ENCODE measurements at regions of chr7 and their contacts with region 1.

Region 1: DNA sequence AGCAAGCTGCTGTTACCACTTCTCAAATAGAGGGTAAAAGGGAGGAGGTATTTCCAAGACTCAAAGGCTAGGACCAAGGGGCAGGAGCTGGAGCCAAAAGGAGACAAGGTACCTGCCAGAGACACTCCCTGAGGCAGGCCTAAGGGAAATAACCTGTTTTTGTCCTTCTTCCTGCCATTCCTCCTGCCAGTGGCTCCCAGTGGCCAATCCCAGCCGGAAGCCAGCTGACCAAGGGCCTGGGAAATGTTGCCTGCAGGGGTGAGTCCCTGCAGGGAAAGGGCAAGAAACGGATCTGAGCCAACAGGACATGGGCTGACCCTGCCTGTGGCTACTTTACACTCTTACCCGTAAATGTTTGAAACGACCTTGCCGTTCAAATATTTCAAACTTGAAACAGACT is 3.5 kb downstream of the CYTH3 start:
- DNase-seq: no peak
- H3K4me3 ChIP-seq: no peak overlapping the region
- H3K4me3 Mint-ChIP-seq: peak overlapping the region in 2 of 7 donors; percentile 25 to 36
- H3K27ac ChIP-seq: no peak overlapping the region
- H3K27ac Mint-ChIP-seq: peak overlapping the region in 4 of 8 donors; percentile 9 to 80 (median 28)
- H3K4me1 ChIP-seq: peaks cover 15% of the 10 kb centered on the region
- H3K4me1 Mint-ChIP-seq: peaks cover 49 to 72% (median 63%) of the 10 kb centered on the region in 3 donors
- H3K27me3 ChIP-seq: no peaks in the 10 kb centered on the region
- H3K27me3 Mint-ChIP-seq: peaks cover 0 to 2% of the 10 kb centered on the region in 2 donors

Region 2: GRCh38 chr7:6256109-6256483 is 12.8 kb before region 1 on chr7:
- CTCF ChIA-PET with region 1: interaction called, 10 read pairs
- POLR2A ChIA-PET with region 1: interaction called, 4 read pairs
- DNase-seq: no peak
- H3K4me3 ChIP-seq: no peak overlapping the region
- H3K4me3 Mint-ChIP-seq: peak overlapping the region in 6 of 7 donors; percentile 35 to 71 (median 42)
- H3K27ac ChIP-seq: no peak overlapping the region
- H3K27ac Mint-ChIP-seq: peak overlapping the region in 5 of 8 donors; percentile 83 to 98 (median 90)
- H3K4me1 ChIP-seq: peaks cover 31% of the 10 kb centered on the region
- H3K4me1 Mint-ChIP-seq: peaks cover 58 to 75% (median 74%) of the 10 kb centered on the region in 3 donors
- H3K27me3 ChIP-seq: no peaks in the 10 kb centered on the region
- H3K27me3 Mint-ChIP-seq: peaks cover 0 to 2% of the 10 kb centered on the region in 2 donors

Region 3: DNA sequence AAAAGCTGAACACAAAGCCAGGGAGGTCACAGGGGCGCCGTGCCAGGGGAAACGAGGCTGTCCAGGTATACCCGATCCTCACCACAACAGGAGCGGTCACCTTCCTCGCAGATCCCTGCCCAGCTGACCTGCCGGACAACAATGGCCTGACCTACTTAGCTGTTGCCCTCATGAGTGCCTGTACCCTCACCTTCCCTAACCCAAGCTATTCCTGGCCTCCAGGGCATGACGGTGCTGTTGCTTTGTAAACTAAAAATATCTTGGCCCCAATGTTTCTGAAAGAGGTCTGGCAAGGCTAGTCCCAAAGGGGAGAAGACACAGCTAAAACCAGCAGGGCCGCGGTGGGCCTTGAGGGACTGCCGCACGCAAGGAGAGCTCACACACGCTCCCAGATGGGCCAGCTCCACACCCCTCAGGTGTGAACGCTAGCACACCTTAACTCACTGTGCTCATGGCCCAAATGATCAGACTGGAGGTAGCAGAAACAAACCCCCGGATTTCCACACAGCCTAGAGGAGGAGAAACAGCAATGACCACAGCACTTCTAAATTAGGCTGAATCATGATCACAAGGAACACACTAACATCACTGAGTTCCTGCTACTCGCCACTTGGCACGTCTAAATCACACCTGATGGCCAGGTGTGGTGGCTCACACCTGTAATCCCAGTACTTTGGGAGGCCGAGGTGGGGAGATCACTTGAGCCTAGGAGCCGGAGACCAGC is 69.8 kb after region 1 on chr7:
- CTCF ChIA-PET with region 1: no interaction called
- POLR2A ChIA-PET with region 1: no interaction called
- DNase-seq: no peak
- H3K4me3 ChIP-seq: no peak overlapping the region
- H3K4me3 Mint-ChIP-seq: no peak overlapping the region
- H3K27ac ChIP-seq: no peak overlapping the region
- H3K27ac Mint-ChIP-seq: no peak overlapping the region
- H3K4me1 ChIP-seq: peaks cover 2% of the 10 kb centered on the region
- H3K4me1 Mint-ChIP-seq: peaks cover 11 to 22% (median 13%) of the 10 kb centered on the region in 3 donors
- H3K27me3 ChIP-seq: no peaks in the 10 kb centered on the region
- H3K27me3 Mint-ChIP-seq: no peaks in the 10 kb centered on the region

Measured in CD8-positive, alpha-beta memory T cell (primary cell).